Vagina (tissue), 2 donors: ENCODE measurements at regions of chr16 and their contacts with region 1.

Region 1: GRCh38 chr16:86343027-86343787 is 167.1 kb upstream of the FOXF1 start:
- DNase-seq: peak in 1 of 2 donors; percentile 94
- H3K4me3 ChIP-seq: peak overlapping the region in 1 of 2 donors; percentile 6
- H3K27ac ChIP-seq: peak overlapping the region; percentile 87
- H3K4me1 ChIP-seq: peaks cover 16% of the 10 kb centered on the region
- H3K27me3 ChIP-seq: no peaks in the 10 kb centered on the region
- CTCF ChIP-seq: no peak
- POLR2A ChIP-seq: no peak

Region 2: GRCh38 chr16:86072328-86073102 is 270.7 kb before region 1 on chr16:
- intact Hi-C with region 1: loop called (anchors 10 kb)
- DNase-seq: no peak
- H3K4me3 ChIP-seq: no peak overlapping the region
- H3K27ac ChIP-seq: no peak overlapping the region
- H3K4me1 ChIP-seq: no peaks in the 10 kb centered on the region
- H3K27me3 ChIP-seq: no peaks in the 10 kb centered on the region
- CTCF ChIP-seq: peak; percentile 53 to 66 (median 53)
- POLR2A ChIP-seq: no peak

Region 3: DNA sequence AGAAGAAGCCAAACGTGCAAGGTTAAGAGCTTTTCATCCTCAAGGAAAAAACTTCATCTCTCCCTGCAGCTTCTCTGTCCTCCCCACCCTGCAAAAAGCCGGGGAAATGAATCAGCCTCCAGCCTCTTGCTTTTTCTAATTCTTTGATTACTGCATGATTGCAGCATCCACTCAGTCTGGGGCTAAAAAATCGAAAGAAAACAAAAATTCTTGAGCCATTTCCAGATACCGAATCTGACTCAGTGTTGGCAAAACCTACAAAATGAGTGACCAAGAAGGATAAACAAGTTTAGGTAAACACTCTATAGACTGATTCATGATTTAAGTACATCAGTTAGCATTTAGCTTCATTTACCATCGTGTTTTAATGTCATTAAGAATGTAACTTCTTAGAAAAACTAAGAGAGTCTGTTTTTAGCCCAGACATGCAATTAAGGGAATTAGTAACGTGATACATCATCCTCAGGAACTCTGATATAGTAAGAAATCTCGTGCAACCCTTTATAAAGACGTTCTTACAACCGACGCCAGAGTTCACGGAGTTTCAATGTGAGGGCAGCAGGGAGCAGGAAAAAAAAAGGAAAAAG is 120.1 kb before region 1 on chr16:
- intact Hi-C with region 1: loop called (anchors 10 kb)
- DNase-seq: no peak
- H3K4me3 ChIP-seq: peak overlapping the region in 1 of 2 donors; percentile 16
- H3K27ac ChIP-seq: peak overlapping the region; percentile 79
- H3K4me1 ChIP-seq: peaks cover 8% of the 10 kb centered on the region
- H3K27me3 ChIP-seq: no peaks in the 10 kb centered on the region
- CTCF ChIP-seq: no peak
- POLR2A ChIP-seq: no peak

Region 4: GRCh38 chr16:86424398-86425367 is 81.5 kb after region 1 on chr16:
- intact Hi-C with region 1: loop called (anchors 10 kb)
- DNase-seq: no peak
- H3K4me3 ChIP-seq: no peak overlapping the region
- H3K27ac ChIP-seq: peak overlapping the region; percentile 66
- H3K4me1 ChIP-seq: peaks cover 42% of the 10 kb centered on the region
- H3K27me3 ChIP-seq: no peaks in the 10 kb centered on the region
- CTCF ChIP-seq: no peak
- POLR2A ChIP-seq: no peak

Region 5: GRCh38 chr16:86509759-86510464 is 166.7 kb after region 1 on chr16:
- intact Hi-C with region 1: loop called (anchors 5 kb)
- DNase-seq: no peak
- H3K4me3 ChIP-seq: peak overlapping the region; percentile 66 to 80
- H3K27ac ChIP-seq: peak overlapping the region; percentile 94
- H3K4me1 ChIP-seq: peaks cover 64% of the 10 kb centered on the region
- H3K27me3 ChIP-seq: no peaks in the 10 kb centered on the region
- CTCF ChIP-seq: no peak
- POLR2A ChIP-seq: peak in 1 of 2 donors; percentile 58

Region 6: DNA sequence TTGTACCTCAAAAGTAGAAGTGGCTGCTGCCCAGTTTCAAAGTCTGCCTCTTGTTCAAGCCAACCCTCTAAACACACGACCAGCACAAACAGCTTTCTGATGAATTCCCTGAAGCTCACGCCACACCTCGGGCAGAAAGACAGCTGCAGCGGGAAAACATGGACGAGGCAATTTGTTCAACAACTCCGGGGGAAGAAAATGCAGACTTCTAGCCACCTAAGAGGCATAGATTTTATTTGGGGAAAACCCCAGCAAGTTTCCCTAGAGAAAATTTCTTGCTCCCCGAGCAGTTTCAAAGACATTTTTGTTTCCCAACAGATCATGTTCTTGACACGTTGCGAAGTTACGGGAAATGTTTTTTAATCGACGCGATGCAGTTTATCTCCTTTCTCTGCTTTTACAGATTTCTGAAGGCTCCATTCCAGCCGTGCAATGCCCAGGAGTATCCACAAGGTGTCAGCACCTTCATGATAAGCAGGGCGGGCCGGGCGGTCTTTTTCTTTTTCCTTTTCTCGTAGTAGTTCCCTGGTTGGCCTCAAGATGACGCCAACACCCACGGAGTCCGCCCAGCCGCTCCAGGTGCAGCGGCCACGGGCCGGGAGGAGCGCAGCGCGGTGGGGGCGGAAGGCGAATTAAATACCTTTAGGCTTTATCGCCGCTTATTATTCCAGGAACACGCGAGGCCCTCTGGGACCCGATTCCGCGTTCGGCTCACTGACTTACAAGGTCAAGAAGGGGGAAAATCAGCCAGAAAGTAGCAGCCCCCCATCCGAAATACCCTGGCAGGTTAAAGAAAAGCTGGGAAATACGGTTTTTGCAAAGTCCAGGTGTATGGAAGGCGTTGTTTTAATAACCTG is 220.5 kb after region 1 on chr16:
- intact Hi-C with region 1: no loop called
- DNase-seq: no peak
- H3K4me3 ChIP-seq: peak overlapping the region in 1 of 2 donors; percentile 28
- H3K27ac ChIP-seq: no peak overlapping the region
- H3K4me1 ChIP-seq: peaks cover 17% of the 10 kb centered on the region
- H3K27me3 ChIP-seq: peaks cover 3% of the 10 kb centered on the region
- CTCF ChIP-seq: peak; percentile 99 to 100 (median 100)
- POLR2A ChIP-seq: no peak